OCI-LY7 (cell line): ENCODE measurements at regions of chr6 and their contacts with region 1.

Region 1: DNA sequence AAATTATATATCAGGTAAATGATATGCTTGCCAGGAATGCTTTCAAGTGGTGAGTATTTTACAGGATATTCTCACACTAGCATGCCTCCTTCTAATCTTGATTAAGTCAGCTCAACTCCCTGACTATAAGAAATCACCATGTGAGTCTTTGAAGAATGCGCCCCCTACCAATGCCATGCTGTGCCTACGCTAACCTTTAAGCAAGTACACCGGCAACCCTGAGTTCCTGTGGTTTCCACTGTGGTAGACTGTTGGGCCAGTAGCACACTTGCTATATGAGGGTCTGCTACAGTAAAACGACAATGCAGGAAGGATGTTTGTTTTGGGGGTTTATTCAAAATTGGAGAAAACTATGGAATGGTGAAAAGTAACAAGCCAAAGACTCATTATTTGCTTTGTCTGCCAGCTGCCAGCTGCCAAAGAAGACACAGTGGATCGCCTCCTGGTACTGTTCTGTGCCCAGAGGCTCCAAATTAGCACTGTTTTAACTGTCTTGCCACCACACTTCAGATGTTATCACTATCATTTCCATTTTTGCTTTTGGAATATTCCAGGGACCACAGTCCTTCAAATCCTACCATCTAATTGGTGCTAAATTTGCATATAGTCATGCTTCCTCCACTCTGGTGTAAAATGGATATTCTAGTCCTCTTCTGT is 333.5 kb downstream of the RNGTT start:
- DNase-seq: peak; percentile 90
- H3K4me3 ChIP-seq: peak overlapping the region; percentile 45
- H3K27ac ChIP-seq: peak overlapping the region; percentile 62
- H3K4me1 ChIP-seq: peaks cover 75% of the 10 kb centered on the region
- CTCF ChIP-seq: peak; percentile 89

Region 2: DNA sequence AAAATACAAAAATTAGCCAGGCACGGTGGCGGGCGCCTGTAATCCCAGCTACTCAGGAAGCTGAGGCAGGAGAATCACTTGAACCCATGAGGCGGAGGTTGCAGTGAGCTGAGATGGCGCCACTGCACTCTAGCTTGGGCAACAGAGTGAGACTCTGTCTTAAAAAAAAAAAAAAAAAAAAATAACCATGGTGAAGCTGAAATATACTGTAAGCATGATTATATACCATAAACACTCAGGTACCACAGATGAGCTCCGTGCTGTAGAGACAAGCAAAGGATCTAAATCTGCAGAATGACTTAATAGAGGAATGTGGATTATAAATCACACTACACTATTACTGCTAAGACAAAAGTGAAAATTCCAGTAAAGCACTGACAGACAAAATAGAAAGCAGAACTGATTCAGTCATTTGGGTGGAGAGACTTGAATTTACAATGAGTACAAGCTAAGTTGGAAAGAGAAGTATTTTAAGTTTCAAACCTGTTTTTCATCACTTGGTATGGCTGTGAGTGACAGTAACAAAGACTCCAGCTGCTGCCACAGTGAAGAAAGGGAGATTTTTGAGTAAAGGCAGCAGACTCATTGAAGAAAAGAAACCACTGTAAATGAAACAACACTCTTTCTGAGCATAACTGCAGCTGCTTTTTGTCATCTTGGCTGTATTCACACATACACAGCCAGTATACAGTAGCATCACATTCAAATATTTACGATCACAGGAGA is 11.4 kb after region 1 on chr6:
- CTCF ChIA-PET with region 1: interaction called, 6 read pairs
- POLR2A ChIA-PET with region 1: interaction called, 38 read pairs
- intact Hi-C with region 1: no loop called
- DNase-seq: peak; percentile 64
- H3K4me3 ChIP-seq: peak overlapping the region; percentile 44
- H3K27ac ChIP-seq: peak overlapping the region; percentile 65
- H3K4me1 ChIP-seq: peaks cover 55% of the 10 kb centered on the region
- CTCF ChIP-seq: no peak; the same call in 1 of the 2 replicates

Region 3: DNA sequence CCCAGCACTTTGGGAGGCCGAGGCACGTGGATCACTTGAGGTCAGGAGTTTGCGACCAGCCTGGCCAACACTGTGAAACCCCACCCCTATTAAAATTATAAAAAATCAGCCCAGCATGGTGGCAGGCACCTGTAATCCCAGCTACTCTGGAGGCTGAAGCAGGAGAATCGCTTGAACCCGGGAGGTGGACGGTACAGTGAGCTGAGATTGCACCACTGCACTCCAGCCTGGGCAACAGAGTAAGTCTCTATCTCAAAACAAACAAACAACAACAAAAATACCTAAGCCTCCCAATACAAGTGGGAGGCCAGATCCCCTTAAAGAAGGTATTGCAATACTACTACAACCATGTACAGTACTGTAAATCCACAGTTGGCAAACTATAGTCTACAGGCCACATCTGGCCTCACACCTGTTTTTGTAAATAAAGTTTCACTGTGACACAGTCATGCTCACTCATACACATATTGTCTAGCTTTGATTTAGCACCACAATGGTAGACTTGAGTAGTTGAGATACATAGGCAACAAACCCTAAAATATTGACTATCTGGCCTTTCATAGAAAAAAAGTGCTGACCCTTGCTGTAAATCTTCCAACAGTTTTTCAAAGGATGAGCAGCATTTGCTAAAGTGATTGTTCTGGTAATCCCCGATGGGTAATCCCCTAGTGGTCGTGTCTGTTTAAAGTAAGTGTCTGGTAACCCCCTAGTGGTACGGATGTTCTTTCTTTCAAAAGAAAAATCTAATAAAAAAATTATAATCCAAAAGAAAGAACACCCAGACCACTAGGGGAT is 131.5 kb after region 1 on chr6:
- CTCF ChIA-PET with region 1: no interaction called
- POLR2A ChIA-PET with region 1: interaction called, 10 read pairs
- intact Hi-C with region 1: loop called (anchors 5 kb)
- DNase-seq: peak; percentile 54
- H3K4me3 ChIP-seq: no peak overlapping the region
- H3K27ac ChIP-seq: peak overlapping the region; percentile 21
- H3K4me1 ChIP-seq: peaks cover 17% of the 10 kb centered on the region
- CTCF ChIP-seq: peak; percentile 72